ENCODE measurements at regions of chr1 and their contacts with region 1.

Region 1: GRCh38 chr1:159214149-159214760 is 9.6 kb downstream of the ACKR1 start:
- DNase-seq: peak; percentile 75
- H3K4me3 Mint-ChIP-seq: no peak overlapping the region
- H3K27ac Mint-ChIP-seq: peak overlapping the region; percentile 30
- H3K4me1 Mint-ChIP-seq: peaks cover 42% of the 10 kb centered on the region
- H3K27me3 Mint-ChIP-seq: no peaks in the 10 kb centered on the region
- CTCF ChIP-seq: peak; percentile 92

Region 2: GRCh38 chr1:159171688-159172501 is 42.4 kb before region 1 on chr1:
- CTCF ChIA-PET with region 1: interaction called, 14 read pairs
- POLR2A ChIA-PET with region 1: no interaction called
- intact Hi-C with region 1: no loop called
- DNase-seq: peak; percentile 44
- H3K4me3 Mint-ChIP-seq: peak overlapping the region; percentile 83
- H3K27ac Mint-ChIP-seq: peak overlapping the region; percentile 1
- H3K4me1 Mint-ChIP-seq: peaks cover 60% of the 10 kb centered on the region
- H3K27me3 Mint-ChIP-seq: peaks cover 11% of the 10 kb centered on the region
- CTCF ChIP-seq: no peak

Region 3: DNA sequence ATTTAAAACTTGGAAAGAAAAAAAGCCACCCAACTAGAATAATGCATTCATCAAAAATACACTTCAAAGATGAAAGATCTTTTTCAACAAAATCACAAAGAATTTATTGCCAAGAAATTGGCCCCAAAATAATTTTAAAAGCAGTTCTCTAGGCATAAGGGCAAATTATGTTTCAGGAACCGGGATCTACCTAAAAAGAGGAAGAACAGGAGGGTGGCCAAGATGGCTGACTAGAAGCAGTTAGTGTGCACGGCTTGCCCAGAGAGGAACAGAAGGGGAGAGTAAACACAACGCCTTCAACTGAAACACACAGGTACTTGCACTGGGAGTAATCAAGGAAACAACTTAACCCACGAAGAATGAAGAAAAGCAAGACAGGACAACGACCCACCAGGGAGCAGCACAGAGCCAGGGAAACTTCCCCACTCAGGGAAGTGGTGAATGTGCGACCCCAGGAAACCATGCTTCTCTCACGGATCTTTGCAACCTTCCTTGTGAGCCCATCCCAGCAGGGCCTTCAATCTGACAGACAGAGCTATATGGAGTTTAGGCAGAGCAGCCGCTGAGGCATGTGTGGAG is 36.5 kb after region 1 on chr1:
- CTCF ChIA-PET with region 1: interaction called, 43 read pairs
- POLR2A ChIA-PET with region 1: interaction called, 3 read pairs
- intact Hi-C with region 1: no loop called
- DNase-seq: no peak
- H3K4me3 Mint-ChIP-seq: no peak overlapping the region
- H3K27ac Mint-ChIP-seq: peak overlapping the region; percentile 84
- H3K4me1 Mint-ChIP-seq: peaks cover 25% of the 10 kb centered on the region
- H3K27me3 Mint-ChIP-seq: no peaks in the 10 kb centered on the region
- CTCF ChIP-seq: no peak

Region 4: DNA sequence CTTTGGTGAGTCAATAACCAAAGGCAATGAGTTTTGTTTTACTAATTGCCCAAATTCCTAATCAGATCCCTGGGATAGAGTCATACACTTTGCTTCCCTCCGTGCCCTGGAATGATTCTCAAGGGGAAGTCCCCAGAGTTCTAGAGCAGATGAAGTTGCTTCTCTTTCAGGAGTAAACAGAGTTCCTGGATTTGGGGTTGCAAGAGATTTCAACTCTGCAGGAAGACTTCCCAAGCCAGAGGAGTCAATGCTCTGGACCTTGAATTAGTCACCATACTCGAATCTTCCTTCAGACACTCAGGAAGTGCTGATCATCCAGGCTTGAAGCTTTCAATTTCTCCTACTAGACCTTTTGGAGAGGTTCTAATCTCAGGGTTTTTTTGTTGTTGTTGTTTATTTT is 127.5 kb after region 1 on chr1:
- CTCF ChIA-PET with region 1: interaction called, 13 read pairs
- POLR2A ChIA-PET with region 1: no interaction called
- intact Hi-C with region 1: no loop called
- DNase-seq: peak; percentile 20
- H3K4me3 Mint-ChIP-seq: no peak overlapping the region
- H3K27ac Mint-ChIP-seq: no peak overlapping the region
- H3K4me1 Mint-ChIP-seq: peaks cover 2% of the 10 kb centered on the region
- H3K27me3 Mint-ChIP-seq: no peaks in the 10 kb centered on the region
- CTCF ChIP-seq: no peak

Region 5: GRCh38 chr1:159737238-159737916 is 523.1 kb after region 1 on chr1:
- CTCF ChIA-PET with region 1: no interaction called
- POLR2A ChIA-PET with region 1: no interaction called
- intact Hi-C with region 1: no loop called
- DNase-seq: no peak
- H3K4me3 Mint-ChIP-seq: no peak overlapping the region
- H3K27ac Mint-ChIP-seq: no peak overlapping the region
- H3K4me1 Mint-ChIP-seq: no peaks in the 10 kb centered on the region
- H3K27me3 Mint-ChIP-seq: no peaks in the 10 kb centered on the region
- CTCF ChIP-seq: no peak

Region 6: DNA sequence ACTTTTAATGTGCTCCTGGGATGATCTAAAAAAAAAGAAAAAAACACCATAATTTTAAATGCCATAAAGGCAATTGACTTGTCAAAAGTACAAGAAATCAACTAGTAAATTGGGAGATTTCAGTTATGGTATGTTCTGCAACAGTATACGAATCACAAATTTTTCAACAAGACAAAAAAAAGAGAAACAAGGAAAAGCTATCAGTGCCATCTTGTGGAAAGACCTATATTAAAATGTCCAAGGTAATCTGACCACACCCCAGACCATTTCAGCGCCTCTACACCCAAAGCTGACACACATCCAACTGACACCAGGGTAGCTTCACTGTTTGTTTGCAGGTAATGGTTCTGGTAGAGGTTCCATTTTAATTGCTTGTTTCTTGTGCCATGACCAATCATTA is 561.5 kb after region 1 on chr1:
- CTCF ChIA-PET with region 1: interaction called, 255 read pairs
- POLR2A ChIA-PET with region 1: interaction called, 15 read pairs
- intact Hi-C with region 1: loop called (anchors 1 kb)
- DNase-seq: peak; percentile 81
- H3K4me3 Mint-ChIP-seq: no peak overlapping the region
- H3K27ac Mint-ChIP-seq: peak overlapping the region; percentile 89
- H3K4me1 Mint-ChIP-seq: peaks cover 68% of the 10 kb centered on the region
- H3K27me3 Mint-ChIP-seq: no peaks in the 10 kb centered on the region
- CTCF ChIP-seq: peak; percentile 63

Region 7: DNA sequence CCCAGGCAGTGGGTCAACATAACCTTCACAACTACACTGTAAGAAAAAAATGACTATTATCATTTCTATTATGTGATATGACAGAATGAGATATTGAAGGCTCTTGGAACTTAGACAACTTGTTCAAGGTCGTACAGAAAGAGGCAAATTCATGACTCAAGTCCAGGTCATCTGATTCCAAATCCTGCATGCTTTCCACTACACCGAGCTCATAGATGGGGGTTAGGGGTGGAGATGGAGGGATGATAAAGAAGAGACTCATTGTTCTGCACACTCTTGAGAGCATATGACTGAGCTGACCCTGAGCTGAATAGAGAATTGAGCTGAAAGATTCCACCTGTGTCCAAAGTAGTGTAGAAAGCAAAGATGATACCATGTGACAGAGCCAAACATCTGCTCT is 590.7 kb after region 1 on chr1:
- CTCF ChIA-PET with region 1: interaction called, 42 read pairs
- POLR2A ChIA-PET with region 1: no interaction called
- intact Hi-C with region 1: no loop called
- DNase-seq: no peak
- H3K4me3 Mint-ChIP-seq: no peak overlapping the region
- H3K27ac Mint-ChIP-seq: no peak overlapping the region
- H3K4me1 Mint-ChIP-seq: peaks cover 6% of the 10 kb centered on the region
- H3K27me3 Mint-ChIP-seq: no peaks in the 10 kb centered on the region
- CTCF ChIP-seq: no peak

Measured in MCF 10A (cell line).